BJ (cell line): ENCODE measurements at regions of chr15 and their contacts with region 1.

Region 1: GRCh38 chr15:88904624-88905327 is 8.4 kb downstream of the MFGE8 start:
- DNase-seq: peak; percentile 56
- H3K4me3 ChIP-seq: no peak overlapping the region
- H3K27me3 ChIP-seq: no peaks in the 10 kb centered on the region
- CTCF ChIP-seq: peak; percentile 98

Region 2: GRCh38 chr15:88274553-88275460 is 630.0 kb before region 1 on chr15:
- CTCF ChIA-PET with region 1: no interaction called
- POLR2A ChIA-PET with region 1: no interaction called
- DNase-seq: no peak
- H3K4me3 ChIP-seq: no peak overlapping the region
- H3K27me3 ChIP-seq: peaks cover 2% of the 10 kb centered on the region
- CTCF ChIP-seq: peak; percentile 91

Region 3: DNA sequence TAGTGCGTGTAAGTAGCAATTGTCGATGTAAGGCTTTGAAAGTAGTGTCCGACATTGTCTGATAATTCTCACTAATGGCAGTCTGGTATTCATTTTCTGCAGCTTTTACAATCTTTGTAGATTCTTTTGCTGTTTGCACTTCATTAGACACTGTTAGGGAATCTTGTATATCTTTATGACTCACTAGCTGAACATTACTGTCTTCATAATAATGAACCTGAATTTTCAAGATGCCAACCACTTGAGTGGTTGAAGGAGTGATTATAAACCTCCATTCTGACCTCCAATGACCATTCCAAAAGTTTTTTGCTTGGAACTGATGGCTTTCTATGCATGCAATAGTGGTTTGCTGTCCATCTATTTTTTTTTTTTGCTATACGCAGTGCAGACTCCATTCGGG is 84.8 kb after region 1 on chr15:
- CTCF ChIA-PET with region 1: interaction called, 22 read pairs
- POLR2A ChIA-PET with region 1: interaction called, 7 read pairs
- DNase-seq: peak; percentile 96
- H3K4me3 ChIP-seq: no peak overlapping the region
- H3K27me3 ChIP-seq: no peaks in the 10 kb centered on the region
- CTCF ChIP-seq: no peak

Region 4: DNA sequence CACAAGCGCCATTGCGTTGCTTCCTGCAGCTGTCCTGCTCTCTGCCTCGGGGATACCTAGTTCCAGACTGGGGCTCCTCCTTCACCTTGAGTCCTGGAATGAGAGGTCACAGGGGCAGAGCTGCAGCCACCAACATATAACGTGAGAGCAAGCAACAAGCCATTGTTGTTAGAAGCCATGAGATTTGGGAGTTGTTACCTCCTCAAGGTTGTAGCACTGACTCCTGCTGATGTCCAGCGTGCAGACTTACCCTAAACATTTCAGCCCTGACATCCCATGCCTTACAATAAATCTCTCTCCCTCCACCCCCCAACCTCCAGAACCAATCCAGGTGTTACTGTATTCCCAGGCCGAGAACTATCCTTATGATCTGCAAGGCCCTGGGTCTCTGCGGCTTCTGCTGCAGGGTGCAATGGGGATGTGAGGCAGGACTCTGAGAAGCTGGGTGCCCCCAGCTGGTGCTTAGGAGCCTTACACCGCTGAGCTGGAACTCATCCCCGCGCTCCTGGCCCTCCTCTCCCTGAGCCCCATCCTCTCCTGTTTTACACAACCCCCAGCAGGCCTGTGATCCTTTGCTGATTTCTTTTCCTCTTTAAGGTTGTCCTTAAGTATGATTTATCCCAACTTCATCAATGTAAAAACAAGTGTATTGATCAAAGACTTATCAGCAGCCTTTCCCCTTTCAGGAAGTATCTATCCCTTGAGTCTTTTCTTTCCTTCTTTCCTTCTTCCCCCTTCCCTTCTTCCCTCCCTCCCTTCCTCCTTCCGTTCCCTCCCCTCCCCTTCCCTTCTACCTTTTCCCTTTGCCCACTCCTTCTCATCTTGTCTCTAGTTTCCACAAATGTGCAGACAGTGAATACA is 99.3 kb after region 1 on chr15:
- CTCF ChIA-PET with region 1: interaction called, 38 read pairs
- POLR2A ChIA-PET with region 1: interaction called, 3 read pairs
- DNase-seq: no peak
- H3K4me3 ChIP-seq: no peak overlapping the region
- H3K27me3 ChIP-seq: no peaks in the 10 kb centered on the region
- CTCF ChIP-seq: peak; percentile 51

Region 5: GRCh38 chr15:89052474-89052873 is 147.7 kb after region 1 on chr15:
- CTCF ChIA-PET with region 1: interaction called, 12 read pairs
- POLR2A ChIA-PET with region 1: no interaction called
- DNase-seq: peak; percentile 77
- H3K4me3 ChIP-seq: no peak overlapping the region
- H3K27me3 ChIP-seq: no peaks in the 10 kb centered on the region
- CTCF ChIP-seq: no peak

Region 6: GRCh38 chr15:89171136-89172072 is 266.6 kb after region 1 on chr15:
- CTCF ChIA-PET with region 1: interaction called, 27 read pairs
- POLR2A ChIA-PET with region 1: no interaction called
- DNase-seq: no peak
- H3K4me3 ChIP-seq: no peak overlapping the region
- H3K27me3 ChIP-seq: no peaks in the 10 kb centered on the region
- CTCF ChIP-seq: peak; percentile 71